ENCODE measurements at regions of chr19 and their contacts with region 1.

Region 1: DNA sequence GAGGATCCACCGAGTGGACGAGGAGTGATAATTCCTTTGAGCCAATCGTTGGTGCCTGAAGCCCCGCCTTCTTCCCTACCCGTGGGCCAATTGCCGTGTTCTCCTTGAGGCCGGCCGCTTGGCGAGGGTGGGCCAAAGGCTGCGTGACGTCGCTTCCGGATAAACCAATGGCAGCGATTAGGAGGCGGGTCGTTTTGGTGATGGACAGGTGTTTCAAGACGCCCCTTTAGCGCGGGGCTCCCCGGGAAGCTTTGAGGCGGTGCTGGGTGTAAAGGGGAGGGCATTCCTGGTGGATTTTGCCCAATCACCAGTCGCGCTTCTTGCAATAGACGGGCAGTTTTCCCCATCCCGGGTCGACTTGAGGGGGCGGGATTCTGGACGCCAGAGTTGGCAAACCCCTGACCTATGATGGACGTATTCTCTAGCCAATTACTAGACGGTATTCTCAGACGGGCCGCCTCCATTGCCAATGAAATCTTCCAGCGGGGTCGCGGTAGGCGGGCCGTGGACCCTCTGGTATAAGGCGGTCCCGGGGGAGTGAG is 310 bp upstream of the PRMT1 start:
- DNase-seq: peak; percentile 99
- H3K4me3 ChIP-seq: peak overlapping the region; percentile 99
- CTCF ChIP-seq: no peak

Region 2: DNA sequence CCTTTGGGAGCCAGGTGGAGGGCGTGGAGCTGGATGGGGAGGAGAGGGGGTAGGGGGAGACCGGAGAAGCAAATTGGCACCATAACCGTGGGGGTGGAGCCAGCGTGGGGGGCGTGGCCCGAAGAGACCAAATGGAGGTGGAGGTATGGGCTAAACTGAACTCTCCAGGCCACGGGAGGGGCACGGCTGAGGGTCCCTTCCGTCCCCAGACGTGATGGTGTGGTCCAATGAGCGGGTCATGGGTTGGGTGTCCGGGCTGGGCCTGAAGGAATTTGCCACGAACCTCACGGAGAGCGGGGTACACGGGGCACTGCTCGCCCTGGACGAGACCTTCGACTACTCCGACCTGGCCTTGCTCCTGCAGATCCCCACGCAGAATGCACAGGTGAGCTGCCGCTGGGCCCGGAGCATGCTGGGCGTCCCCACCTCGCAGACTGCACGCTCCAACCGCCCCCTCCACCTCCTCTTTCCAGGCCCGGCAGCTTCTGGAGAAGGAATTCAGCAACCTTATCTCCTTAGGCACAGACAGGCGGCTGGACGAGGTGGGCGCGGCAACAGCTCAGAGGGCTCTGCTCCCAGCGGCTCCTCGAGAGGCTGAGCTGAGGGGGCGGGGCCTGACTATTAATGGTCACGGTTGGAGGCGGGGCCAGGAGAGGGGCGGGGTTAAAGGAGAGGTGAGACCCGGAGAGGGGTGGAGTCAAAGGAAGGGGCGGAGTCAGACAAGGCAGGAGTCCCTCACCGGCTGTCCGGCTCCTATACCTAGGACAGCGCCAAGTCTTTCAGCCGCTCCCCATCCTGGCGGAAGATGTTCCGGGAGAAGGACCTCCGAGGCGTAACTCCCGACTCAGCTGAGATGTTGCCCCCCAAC is 527.7 kb before region 1 on chr19:
- CTCF ChIA-PET with region 1: no interaction called
- POLR2A ChIA-PET with region 1: no interaction called
- DNase-seq: no peak
- H3K4me3 ChIP-seq: peak overlapping the region; percentile 95
- CTCF ChIP-seq: no peak

Region 3: DNA sequence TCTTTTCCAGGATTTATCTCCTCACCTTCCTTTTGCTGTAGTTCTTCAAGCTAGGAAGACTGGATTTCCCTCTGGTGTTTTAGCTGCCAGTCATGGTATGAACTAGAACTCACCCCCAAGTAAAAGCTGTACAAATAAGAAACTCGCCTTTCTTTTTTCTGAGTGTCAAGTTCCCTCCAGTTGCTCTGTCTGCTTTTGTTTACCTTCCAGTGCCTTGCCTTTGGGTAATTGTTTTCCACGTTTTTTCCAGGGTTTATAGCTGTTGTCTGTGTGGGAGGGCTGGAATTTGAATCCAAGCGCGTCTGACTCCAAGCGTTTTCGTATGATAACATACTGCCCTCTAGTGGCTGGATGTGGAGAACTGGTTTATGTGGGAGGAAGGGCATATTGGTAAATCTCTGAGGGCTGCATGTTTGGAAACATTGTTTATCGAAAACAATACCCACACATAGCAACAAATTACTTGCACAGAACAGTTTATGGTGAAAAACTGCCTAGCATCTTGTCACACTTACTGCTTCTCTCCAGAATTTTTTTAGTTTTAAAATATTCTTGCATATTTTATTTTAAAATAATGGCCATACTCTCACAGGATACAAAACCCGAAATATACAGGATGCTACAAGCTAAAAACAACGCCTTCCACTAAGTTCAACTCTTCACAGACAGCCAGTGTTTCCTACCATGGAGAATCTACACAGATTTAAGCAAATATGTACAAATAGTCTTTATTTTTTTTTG is 129.8 kb before region 1 on chr19:
- CTCF ChIA-PET with region 1: interaction called, 11 read pairs
- POLR2A ChIA-PET with region 1: no interaction called
- DNase-seq: no peak
- H3K4me3 ChIP-seq: no peak overlapping the region
- CTCF ChIP-seq: peak; percentile 64

Region 4: DNA sequence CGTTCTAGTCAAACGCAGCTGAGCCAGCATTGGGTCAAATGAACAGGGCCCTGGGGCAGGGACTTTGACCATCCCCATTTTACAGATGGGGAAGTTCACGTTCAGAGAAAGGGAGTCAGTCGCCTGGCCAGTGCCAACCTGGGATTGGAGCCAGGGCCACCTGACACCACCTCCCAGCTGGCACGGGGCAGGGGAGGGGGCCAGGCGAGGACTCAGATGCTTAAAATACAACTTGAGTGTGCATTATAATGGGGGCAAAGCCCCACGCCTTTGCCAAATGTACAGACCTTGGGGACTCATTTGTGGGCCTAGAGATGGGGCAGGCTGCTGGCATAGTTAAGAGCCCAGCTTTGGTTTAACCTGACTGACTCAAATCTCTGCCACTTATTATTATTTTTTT is 71.2 kb before region 1 on chr19:
- CTCF ChIA-PET with region 1: no interaction called
- POLR2A ChIA-PET with region 1: no interaction called
- DNase-seq: no peak
- H3K4me3 ChIP-seq: no peak overlapping the region
- CTCF ChIP-seq: no peak

Region 5: GRCh38 chr19:49640113-49640898 is 36.5 kb before region 1 on chr19 and contains the start of gene RRAS:
- CTCF ChIA-PET with region 1: interaction called, 53 read pairs
- POLR2A ChIA-PET with region 1: interaction called, 23 read pairs
- DNase-seq: peak; percentile 99
- H3K4me3 ChIP-seq: peak within 1 kb of the TSS; percentile 63
- CTCF ChIP-seq: no peak

Region 6: GRCh38 chr19:49665351-49666119 is 11.2 kb before region 1 on chr19 and contains the starts of genes BCL2L12 and IRF3:
- CTCF ChIA-PET with region 1: interaction called, 48 read pairs
- POLR2A ChIA-PET with region 1: interaction called, 17 read pairs
- DNase-seq: peak; percentile 68
- H3K4me3 ChIP-seq: peak within 1 kb of the TSS; percentile 96
- CTCF ChIP-seq: peak; percentile 4

Region 7: DNA sequence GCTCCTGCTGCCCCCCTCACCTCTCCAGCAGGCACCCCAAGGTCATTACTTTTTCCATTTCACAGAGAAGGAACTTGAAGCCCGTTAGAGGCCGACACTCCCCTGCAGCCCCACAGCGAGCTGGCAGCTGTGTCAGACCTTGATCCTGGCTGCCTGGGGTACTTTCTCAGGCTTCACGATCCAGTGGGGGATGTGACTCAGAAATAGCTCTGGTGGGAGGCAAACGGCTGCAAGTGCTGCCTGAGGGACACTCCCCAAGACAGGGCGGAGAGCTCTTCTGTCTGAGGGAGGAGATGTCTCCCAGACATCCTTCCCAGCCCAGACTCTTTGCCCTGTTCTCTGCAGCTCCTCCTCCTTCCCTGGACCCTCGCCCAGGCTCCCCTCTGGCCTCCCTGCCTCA is 81.5 kb after region 1 on chr19:
- CTCF ChIA-PET with region 1: interaction called, 15 read pairs
- POLR2A ChIA-PET with region 1: no interaction called
- DNase-seq: peak; percentile 46
- H3K4me3 ChIP-seq: no peak overlapping the region
- CTCF ChIP-seq: no peak

Region 8: GRCh38 chr19:49779731-49780589 is 103.2 kb after region 1 on chr19:
- CTCF ChIA-PET with region 1: no interaction called
- POLR2A ChIA-PET with region 1: no interaction called
- DNase-seq: no peak
- H3K4me3 ChIP-seq: no peak overlapping the region
- CTCF ChIP-seq: no peak